ENCODE measurements at regions of chr19 and their contacts with region 1.

Region 1: GRCh38 chr19:11203194-11204075 is 6.1 kb upstream of the KANK2 start:
- DNase-seq: peak; percentile 77
- H3K4me3 ChIP-seq: peak overlapping the region; percentile 54
- H3K27ac ChIP-seq: peak overlapping the region; percentile 95
- H3K4me1 ChIP-seq: peaks cover 49% of the 10 kb centered on the region
- H3K27me3 ChIP-seq: no peaks in the 10 kb centered on the region
- CTCF ChIP-seq: peak; percentile 91

Region 2: DNA sequence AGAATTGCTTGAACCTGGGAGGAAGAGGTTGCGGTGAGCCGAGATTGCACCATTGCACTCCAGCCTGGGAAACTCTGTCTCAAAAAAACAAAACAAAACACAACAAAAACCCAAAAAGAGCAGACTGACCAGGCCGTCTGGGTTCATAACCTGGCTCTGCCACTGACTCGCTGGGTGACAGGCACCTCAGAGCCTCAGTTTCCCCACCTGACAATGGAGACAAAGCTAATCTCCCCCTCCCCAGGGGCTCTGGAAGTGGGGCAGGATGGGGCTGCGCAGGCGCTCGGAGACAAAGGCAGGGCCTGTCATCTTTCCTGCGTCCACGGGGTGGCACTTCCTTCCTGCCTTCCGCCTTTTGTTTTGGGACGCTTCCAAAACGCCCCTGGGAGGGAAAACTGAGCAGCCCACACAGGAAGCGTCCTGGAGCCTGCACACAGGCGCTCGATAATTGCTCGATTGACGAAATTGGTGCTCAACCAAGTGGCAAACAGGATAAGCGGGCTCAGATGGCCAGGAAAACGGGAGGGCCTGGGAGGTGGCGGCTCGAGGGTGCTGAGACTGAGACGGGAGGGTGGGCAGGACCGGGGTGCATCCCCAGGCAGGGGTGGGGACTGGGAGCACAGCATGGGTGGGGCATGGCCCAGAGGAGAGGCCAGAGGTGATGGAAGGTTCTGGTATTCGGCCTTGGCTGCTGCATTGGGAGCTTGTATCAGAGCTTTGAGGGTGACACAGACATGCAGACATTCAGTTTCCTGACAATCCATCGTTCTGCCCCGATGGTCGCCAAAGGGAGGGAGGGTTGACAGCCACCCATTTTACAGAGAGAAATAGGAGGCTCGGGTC is 65.7 kb before region 1 on chr19:
- intact Hi-C with region 1: loop called (anchors 5 kb)
- DNase-seq: peak; percentile 83
- H3K4me3 ChIP-seq: peak overlapping the region; percentile 53
- H3K27ac ChIP-seq: peak overlapping the region; percentile 100
- H3K4me1 ChIP-seq: peaks cover 57% of the 10 kb centered on the region
- H3K27me3 ChIP-seq: no peaks in the 10 kb centered on the region
- CTCF ChIP-seq: peak; percentile 87

Measured in left ventricle myocardium inferior (tissue), 1 donor.